A673 (cell line): ENCODE measurements at regions of chr1 and their contacts with region 1.

Region 1: GRCh38 chr1:227768640-227769039 is 33.4 kb downstream of the SNAP47 start:
- DNase-seq: no peak
- H3K4me3 ChIP-seq: no peak overlapping the region
- H3K27ac ChIP-seq: no peak overlapping the region
- H3K4me1 ChIP-seq: no peaks in the 10 kb centered on the region
- H3K27me3 ChIP-seq: no peaks in the 10 kb centered on the region
- CTCF ChIP-seq: no peak

Region 2: DNA sequence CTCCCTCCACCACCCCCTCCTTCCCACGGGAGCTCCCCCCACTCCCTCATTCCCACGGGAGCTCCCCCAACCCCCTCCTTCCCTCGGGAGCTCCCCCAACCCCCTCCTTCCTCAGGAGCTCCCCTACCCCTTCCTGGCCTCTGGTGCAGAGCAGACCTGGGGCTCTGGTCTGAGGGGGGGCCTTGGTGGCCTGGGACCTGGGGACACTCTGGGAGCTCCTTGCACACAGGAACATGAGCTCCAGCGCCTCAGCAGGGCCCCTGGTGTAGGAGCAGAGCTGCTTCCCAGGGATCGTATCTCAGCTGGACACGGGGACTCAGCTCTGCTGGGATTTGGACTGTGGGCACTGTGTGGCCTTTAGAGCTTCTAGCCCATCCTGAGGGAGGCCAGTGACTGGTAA is 27.1 kb after region 1 on chr1:
- CTCF ChIA-PET with region 1: interaction called, 10 read pairs
- POLR2A ChIA-PET with region 1: no interaction called
- intact Hi-C with region 1: no loop called
- DNase-seq: no peak
- H3K4me3 ChIP-seq: no peak overlapping the region
- H3K27ac ChIP-seq: no peak overlapping the region
- H3K4me1 ChIP-seq: peaks cover 21% of the 10 kb centered on the region
- H3K27me3 ChIP-seq: no peaks in the 10 kb centered on the region
- CTCF ChIP-seq: no peak